ENCODE measurements at regions of chr2 and their contacts with region 1.

Region 1: GRCh38 chr2:24490674-24491625 is at the start of gene NCOA1:
- DNase-seq: peak; percentile 95
- H3K4me3 Mint-ChIP-seq: peak within 1 kb of the TSS; percentile 89
- H3K27ac Mint-ChIP-seq: peak within 1 kb of the TSS; percentile 95
- H3K4me1 Mint-ChIP-seq: peaks cover 47% of the 10 kb centered on the region
- H3K27me3 Mint-ChIP-seq: no peaks in the 10 kb centered on the region
- total RNA-seq, gene NCOA1: 14.0 to 15.4 TPM

Region 2: DNA sequence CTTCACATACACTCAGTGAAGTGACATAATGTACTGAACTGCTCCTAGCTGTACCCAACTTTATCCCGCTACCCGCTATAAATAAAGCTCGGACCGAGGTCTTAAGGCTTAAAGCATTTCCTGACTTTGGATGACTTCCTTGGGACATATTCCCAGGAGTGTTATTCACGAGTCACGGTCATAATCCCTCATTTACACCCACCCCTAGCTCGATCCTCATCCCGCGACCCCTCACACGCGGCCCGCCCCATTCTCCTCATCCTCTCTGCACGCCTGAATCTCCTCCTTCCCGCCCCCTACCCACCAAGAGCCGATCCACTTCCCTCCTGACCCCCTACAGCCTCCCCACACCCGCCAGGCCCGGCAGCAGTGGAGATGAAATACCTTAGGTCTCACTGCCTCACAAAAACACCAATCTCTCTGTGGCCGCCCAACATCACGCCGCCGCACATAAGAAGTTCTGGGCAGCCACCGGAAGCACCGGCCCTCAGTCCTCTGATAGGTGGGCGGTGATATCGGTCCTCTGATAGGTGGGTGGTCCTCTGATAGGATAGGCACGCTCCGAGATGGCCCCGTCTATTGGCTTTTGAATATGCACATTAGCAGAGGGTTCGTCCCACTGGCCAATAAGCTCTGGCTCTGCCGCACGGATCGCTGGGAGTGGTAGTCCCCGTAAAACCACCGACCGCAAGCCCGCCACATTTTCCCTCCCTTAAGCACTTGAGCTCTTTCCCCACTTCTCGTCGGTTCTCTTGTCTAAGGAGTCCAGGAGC is 443.8 kb before region 1 on chr2 and contains the start of gene WDCP:
- CTCF ChIA-PET with region 1: no interaction called
- intact Hi-C with region 1: loop called (anchors 10 kb)
- DNase-seq: peak; percentile 98
- H3K4me3 Mint-ChIP-seq: peak within 1 kb of the TSS; percentile 95
- H3K27ac Mint-ChIP-seq: peak within 1 kb of the TSS; percentile 80
- H3K4me1 Mint-ChIP-seq: peaks cover 22% of the 10 kb centered on the region
- H3K27me3 Mint-ChIP-seq: peaks cover 7% of the 10 kb centered on the region
- total RNA-seq, gene WDCP: 17.6 to 21.1 TPM

Region 3: DNA sequence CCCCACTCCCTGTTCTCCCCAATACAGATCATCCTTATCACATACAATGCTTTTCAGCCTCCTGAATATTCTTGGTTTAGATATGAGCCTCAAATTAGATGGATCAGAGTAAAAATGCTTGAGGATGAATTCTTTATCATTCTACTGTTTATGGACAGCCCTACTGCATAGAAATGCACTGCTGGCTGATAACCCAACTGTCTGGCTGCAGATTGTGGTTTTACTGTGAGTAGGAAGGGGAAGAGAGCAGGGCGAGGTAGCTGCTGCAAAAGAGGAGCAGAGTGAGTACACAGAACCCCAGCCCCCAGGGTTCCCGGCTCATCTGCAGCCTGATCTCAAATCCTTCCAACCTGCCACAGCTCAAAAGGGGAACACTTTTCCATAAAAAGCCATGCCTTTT is 29.3 kb before region 1 on chr2:
- CTCF ChIA-PET with region 1: no interaction called
- intact Hi-C with region 1: no loop called
- DNase-seq: no peak
- H3K4me3 Mint-ChIP-seq: no peak overlapping the region
- H3K27ac Mint-ChIP-seq: no peak overlapping the region
- H3K4me1 Mint-ChIP-seq: peaks cover 7% of the 10 kb centered on the region
- H3K27me3 Mint-ChIP-seq: no peaks in the 10 kb centered on the region

Region 4: GRCh38 chr2:24509425-24509824 is 18.5 kb after region 1 on chr2:
- CTCF ChIA-PET with region 1: interaction called, 4 read pairs
- intact Hi-C with region 1: loop called (anchors 2 kb)
- DNase-seq: no peak
- H3K4me3 Mint-ChIP-seq: no peak overlapping the region
- H3K27ac Mint-ChIP-seq: no peak overlapping the region
- H3K4me1 Mint-ChIP-seq: peaks cover 68% of the 10 kb centered on the region
- H3K27me3 Mint-ChIP-seq: no peaks in the 10 kb centered on the region

Region 5: DNA sequence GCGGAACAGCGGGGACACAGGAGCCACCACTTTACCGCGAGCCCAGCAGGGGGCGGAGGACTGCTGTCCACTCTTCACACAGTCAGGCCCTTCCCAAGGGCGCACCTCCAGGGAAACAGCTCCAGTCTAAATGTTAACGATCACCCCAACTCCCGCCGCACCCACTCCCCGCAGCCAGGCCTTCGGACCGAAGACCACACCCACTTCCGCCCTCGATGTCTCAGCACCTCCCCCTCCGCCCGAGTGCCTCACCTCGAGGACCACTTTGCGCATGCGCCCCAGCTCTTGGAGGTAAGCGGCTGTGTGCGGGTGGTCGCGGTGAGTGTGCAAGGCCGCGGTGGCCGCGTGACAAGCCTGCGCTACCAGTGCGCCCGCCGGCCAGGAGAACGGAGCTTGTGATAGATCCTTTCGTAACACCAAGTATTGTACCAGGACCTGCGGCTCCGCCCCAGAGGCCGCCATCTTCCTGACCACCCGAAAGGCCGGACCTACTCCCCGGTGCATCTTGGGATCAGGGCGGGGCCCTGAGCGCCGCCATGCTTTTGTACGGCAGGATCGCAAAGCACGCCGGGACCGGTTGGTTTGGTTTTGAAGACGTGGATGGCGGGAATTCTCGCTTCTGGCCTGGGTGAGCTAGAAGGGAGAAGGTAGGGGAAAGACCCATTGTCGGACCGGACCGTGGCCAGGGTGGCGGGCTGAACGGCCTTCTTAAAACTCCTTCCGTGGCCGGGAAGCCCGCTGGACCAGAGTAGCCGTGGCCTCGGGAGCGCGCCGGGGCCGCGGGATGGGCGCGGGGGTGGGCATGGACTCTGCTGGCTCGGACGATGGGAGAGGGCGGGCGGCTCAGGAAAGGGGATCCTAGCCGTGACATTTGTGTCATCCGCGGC is 302.2 kb after region 1 on chr2 and contains the starts of genes CENPO and PTRHD1:
- CTCF ChIA-PET with region 1: interaction called, 5 read pairs
- intact Hi-C with region 1: loop called (anchors 1 kb)
- DNase-seq: peak; percentile 97
- H3K4me3 Mint-ChIP-seq: peak within 1 kb of the TSS; percentile 97
- H3K27ac Mint-ChIP-seq: peak within 1 kb of the TSS; percentile 99
- H3K4me1 Mint-ChIP-seq: peaks cover 40% of the 10 kb centered on the region
- H3K27me3 Mint-ChIP-seq: no peaks in the 10 kb centered on the region
- total RNA-seq, gene CENPO: 36.4 to 38.5 TPM
- total RNA-seq, gene PTRHD1: 21.7 to 23.5 TPM

Region 6: DNA sequence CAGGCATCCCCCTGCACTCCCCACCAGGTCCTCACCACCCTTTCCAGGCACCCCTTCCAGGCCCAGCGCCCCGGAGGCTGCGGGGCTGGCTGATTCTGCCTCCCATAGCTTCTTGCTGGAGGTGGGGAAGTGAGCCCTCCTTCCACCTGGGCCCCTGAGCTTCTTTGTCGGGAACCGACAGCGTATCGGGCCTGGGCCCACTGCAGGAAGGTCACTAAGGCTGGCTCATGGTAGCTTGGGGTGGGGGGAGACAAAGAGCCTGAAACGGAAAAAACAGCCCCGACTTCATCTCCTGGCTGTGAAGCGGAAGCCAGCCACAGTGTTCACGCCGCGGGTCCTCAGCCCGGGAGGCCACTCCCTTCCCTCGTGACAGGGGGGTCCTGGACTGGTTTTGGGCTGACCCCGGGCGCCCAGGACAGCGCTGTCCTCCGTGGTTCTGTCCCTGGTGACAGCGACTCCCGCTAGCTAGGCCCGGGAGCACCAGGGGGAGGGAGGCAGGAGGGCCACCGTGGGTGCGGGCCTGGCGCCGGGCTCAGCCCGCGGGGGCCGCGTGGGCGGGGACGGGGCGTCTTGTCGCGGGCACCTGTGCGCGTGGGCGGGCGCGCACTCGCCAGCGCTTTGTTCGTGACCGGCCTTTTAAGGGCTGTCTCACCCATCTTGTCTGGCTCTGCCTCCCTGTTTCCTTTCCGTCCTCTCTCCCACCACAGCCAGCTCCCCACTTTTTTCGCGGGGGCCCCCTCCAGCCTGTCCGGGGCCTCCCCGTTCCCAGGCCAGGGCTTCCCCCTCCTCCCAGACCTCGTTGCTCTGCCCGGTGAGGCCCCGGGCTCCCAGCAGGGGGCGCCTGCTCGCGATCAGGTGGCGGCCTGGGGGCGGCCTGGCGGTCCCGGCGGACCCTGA is 785.9 kb after region 1 on chr2:
- CTCF ChIA-PET with region 1: no interaction called
- intact Hi-C with region 1: loop called (anchors 10 kb)
- DNase-seq: peak; percentile 88
- H3K4me3 Mint-ChIP-seq: peak overlapping the region; percentile 55
- H3K27ac Mint-ChIP-seq: peak overlapping the region; percentile 94
- H3K4me1 Mint-ChIP-seq: peaks cover 83% of the 10 kb centered on the region
- H3K27me3 Mint-ChIP-seq: no peaks in the 10 kb centered on the region